GM10248 (cell line): ENCODE measurements at regions of chr19 and their contacts with region 1.

Region 1: DNA sequence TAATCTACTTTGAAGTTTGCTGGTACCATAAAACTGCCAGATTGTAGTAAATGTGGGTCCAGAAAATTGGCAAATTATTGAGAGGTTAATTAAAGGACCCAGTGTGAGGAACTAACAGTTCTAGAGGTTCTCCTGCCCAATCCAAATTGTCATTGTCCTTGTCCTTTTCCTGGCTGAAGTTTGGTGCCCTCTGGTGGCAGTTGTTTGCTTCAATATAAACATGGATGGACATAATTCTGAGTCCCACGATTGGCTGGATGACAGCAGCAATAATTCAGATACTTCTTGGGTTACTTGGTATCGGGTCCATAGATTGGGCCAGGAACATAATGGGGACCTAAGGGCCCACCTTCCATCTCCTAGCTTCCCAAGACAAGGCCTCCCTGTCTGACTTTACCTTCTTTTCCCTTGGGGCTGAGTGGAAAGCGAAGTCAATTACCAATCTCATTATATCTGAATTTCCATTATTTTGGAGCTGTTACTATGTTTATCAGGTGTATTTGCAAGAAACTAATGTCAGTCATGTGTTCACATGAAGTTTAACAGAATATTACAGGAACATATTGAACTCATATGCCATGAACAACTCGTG is 33.8 kb upstream of the GARRE1 start:
- DNase-seq: peak; percentile 53
- CTCF ChIP-seq: peak; percentile 63

Region 2: DNA sequence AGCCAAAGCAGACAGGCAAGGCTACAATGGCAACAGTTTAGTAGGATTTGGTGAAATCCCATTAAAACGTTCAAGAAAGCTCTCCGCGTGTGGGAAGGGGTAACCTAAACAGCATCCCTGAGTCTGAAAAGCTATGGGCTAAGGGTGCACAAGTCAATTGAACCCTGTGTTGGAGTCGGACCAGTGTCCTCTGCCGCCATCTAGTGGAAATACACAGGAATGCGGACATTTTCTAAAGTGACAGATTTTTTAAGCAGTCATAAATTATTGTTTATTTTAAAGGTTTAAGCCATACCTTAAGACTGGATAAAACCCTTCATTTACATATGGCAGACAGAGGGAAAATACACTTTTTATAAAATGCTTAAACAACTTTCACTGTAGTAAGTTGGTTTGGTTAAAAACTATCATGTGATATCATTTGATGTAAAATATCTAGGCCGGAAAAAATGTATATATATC is 74.8 kb before region 1 on chr19:
- CTCF ChIA-PET with region 1: no interaction called
- POLR2A ChIA-PET with region 1: no interaction called
- DNase-seq: peak; percentile 62
- CTCF ChIP-seq: peak; percentile 74

Region 3: DNA sequence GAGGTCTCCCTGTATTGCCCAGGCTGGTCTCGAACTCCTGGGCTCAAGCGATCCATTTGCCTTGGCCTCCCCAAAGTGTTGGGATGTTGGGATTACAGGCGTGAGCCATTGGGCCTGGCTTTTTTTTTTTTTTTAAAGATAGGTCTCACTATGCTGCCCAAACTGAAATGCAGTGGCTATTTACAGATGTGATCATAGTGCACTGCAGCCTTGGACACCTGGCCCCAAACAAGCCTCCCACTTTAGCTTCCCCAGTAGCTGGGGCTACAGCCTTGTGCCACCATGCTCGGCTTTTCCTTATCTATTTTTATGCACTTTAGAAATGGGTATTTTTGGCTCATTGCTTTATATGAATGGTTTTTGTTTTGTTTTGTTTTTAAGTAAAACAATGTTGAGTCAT is 10.8 kb before region 1 on chr19:
- CTCF ChIA-PET with region 1: interaction called, 12 read pairs
- POLR2A ChIA-PET with region 1: no interaction called
- DNase-seq: no peak
- CTCF ChIP-seq: no peak

Region 4: DNA sequence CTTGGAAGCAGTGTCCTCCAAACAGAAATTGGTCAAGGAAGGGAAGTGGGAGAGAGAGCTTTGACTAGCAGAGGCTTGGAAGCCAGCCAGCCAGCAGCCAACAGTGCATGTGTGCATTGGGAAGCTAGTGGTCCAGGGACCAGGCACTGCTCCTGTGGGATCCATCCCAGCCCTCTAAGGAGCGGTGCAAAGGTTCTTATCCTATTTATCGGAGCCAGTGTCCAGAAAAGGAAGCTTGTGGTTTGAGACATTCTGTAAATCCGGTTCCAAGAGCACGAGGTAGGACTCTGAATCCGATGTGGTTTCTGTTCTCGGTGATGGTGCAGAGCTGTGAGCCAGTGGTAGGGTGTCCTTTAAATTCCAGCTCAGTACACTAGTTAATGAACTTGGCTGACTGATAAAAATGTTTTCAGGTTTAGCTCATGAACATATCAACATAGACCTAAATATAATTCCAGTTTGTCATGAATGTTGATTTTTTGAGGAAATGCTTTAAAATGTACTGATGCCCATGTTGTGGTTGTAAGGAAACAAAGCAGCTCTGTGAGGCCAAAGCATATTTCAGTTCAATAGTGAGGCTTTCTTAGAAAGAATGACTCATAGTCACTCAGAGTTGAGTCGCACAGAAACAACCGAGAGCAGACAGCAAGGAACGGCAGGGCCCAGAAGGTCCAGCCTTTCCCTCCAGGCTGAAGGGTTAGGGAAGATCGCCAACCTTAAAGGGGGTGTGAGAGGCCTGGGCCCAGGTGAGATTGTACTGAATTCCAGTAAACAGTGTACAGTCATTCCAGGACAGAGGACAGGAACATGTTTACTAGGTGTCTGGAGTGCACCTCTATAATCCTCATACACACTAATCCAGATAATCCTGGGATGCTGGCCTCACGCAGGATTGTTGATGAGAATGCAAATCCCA is 12.3 kb after region 1 on chr19:
- CTCF ChIA-PET with region 1: interaction called, 17 read pairs
- POLR2A ChIA-PET with region 1: no interaction called
- DNase-seq: peak; percentile 60
- CTCF ChIP-seq: no peak